Posterior vena cava (tissue), 2 donors: ENCODE measurements at regions of chr11 and their contacts with region 1.

Region 1: DNA sequence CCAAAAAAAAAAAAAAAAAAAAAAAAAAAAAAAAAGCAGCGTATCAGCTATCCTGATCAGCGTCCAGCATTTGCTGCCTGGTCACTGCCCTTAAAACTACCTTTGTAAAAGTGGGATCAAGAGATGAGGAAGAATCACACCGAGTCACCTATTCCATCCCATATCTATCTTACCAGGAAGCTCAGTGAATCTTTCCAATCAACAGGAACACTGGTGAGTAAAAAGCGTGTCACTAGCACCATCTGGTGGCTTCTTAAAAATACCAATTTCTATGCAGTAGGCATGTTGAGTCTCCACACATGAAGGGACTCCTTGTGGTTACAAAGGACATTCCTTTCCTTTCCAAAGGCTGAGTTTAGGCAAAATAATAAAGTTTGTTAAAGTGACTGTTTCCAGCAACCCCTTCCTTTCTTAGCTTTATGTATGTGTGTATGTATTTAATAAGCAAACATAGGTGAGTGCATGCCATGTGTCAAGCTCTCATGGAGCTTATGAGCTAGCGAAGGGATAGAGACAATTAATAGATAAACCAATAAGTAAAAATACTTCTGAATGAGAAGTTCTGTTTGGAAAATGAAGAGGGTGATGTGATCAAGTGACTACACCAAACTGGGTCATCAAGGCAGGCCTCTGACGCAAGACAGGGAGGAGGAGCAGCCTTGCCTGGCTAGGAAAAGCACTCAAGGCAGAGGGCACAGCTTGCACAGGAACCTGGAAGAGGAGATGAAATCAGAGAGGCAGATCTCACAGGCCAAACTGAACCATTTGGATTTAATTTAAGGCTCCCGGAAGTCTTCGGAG is 13.9 kb upstream of the TP53AIP1 start:
- DNase-seq: no peak

Region 2: DNA sequence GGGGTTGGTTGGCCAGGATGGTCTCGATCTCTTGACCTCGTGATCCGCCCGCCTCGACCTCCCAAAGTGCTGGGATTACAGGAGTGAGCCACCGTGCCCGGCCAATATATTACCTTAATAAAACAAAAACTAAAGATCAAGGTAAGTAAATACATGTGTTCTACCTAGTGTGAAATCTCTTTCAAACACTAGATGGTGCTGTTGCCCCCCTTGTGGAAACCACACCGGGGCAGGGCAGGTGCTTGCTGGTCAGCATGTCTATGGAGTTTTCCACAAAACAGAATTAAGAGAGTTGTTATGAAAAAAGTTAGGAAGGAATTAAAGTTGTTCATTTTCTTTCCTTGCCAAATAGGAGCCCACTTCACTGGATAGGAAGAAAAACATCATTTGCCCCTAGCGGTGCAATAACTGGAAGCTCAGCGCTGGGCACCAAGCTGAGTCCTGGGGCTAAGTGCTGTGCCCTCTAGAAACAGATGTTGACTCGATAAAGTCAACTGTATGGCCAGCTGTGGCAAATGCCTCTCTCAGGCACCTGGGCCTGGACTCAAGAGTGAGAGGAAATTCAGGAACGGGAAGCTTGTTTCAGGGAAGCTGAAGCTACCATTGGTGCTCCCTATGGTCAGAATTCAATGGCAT is 71.8 kb before region 1 on chr11:
- intact Hi-C with region 1: loop called (anchors 1 to 2 kb)
- DNase-seq: no peak